ENCODE measurements at regions of chr11 and their contacts with region 1.

Region 1: DNA sequence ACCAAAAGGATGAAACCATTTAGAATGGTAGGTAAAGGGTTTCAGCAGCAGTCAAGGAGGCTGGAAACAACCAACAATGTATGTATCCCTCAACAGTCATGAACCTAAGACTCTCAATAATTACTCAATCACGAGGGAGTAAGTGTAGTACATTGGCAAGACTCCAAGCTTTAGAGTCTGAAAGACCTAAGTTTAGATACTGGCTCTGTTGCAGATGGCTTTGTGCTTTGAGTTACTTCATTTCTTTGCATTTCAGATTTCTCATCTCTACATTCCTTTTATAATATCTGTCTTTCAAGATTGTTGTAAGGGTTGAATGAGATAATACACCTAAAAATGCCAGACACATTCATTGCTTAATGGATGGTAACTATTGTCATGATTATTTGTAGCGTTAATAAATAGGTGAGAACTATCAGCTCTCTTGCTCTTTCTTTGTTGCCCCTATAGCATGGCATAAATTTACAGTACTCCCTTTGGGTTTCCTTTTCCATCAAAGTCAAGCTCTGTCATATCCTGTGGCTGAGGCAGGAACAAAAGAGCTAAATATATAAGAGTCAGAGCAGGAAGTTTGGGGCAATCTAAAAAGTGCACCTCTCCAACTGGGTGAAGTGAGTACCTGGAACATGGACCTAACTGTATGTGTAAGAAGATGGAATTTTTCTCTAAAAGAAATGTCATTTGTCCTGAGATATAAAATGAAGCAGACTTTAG is 228.2 kb upstream of the ZC3H12C start:
- DNase-seq: peak; percentile 25
- CTCF ChIP-seq: no peak

Region 2: GRCh38 chr11:109929308-109929707 is 64.3 kb after region 1 on chr11:
- in situ Hi-C with region 1: loop called (anchors 10 kb)
- DNase-seq: no peak
- CTCF ChIP-seq: no peak

Region 3: GRCh38 chr11:110134110-110134509 is 269.1 kb after region 1 on chr11:
- in situ Hi-C with region 1: no loop called
- DNase-seq: no peak
- CTCF ChIP-seq: no peak

Measured in GM13977 (cell line).